HEK293T (cell line): ENCODE measurements at regions of chr20 and their contacts with region 1.

Region 1: GRCh38 chr20:63740627-63741354 is 1.2 kb downstream of the SLC2A4RG start:
- DNase-seq: peak; percentile 70

Region 2: DNA sequence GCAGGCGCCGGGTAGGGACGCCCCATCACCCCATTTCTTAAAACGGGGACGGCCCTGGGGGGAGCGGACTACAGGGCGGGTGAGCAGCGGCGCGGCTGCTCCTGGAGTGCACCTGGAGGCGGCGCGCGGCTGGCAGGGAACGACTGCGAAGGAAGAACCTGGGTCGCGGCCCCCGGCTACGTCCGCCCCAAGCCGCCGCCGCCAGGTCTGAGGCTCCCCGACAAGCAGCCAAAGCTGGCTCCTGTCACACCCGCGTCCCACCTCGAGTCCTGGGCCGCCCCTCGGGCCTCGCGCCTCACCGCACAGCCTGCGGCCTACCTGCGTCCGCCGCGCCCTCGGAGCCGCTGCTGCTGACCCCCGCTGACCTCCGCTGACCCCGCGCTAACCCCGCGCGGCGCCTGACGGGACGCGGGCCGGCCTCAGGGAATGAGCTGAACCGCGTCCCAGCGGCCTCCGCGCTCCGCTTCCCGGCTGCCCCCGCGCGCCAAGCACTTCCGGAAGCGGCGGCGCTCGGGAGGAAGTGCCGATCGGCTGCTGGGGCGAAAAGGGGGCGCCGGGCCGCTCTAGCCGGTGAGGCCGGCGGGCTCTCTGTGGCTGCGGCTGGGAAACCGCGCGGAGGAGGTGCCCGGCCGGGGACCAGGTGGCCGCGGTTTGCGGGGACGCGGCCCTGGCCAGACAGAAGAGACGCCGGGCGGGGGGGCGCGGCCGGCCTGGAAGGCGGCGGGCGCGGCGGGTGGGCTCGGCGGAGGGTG is 33.1 kb before region 1 on chr20 and contains the starts of genes ARFRP1 and ZGPAT:
- CTCF ChIA-PET with region 1: interaction called, 3 read pairs
- POLR2A ChIA-PET with region 1: interaction called, 14 read pairs
- DNase-seq: peak; percentile 91